Activated CD4-positive, alpha-beta memory T cell treated with anti-CD3 and anti-CD28 coated beads for 36 hours (primary cell): ENCODE measurements at regions of chr4 and their contacts with region 1.

Region 1: DNA sequence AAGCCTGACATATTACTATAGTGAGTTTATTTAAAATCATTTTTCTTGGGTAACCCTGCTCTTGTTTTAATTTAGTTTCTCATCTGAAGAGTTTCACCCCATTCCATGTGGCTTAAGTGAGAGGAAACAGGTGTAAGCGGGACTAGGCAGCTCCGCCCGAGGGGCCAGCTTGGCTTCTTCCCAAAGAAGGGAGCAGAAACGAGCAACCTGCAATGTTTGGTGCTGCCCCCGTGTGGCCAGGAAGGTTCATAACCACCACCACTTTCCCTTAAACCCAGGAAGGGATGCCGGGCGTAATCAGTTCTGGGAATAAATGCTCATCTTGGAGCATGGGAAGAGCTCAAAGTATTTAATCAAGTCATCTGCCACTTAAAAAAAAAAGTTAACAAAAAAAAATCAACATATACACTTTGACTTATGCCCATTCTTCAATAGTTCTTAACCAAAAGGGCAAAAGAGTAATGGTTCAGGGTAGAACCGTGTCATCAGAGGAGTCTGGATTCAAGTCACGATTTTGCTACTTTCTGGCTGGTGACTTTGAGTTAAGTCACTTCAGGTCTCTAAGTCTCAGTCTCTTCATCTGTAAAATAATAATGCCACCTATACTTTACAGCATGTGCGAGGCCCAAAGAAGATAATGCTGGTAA is 147.9 kb downstream of the NSUN7 start:
- DNase-seq: peak; percentile 76
- H3K4me3 Mint-ChIP-seq: peak overlapping the region; percentile 52
- H3K27ac Mint-ChIP-seq: no peak overlapping the region
- H3K4me1 Mint-ChIP-seq: peaks cover 4% of the 10 kb centered on the region
- H3K27me3 Mint-ChIP-seq: peaks cover 2% of the 10 kb centered on the region

Region 2: GRCh38 chr4:40736910-40737309 is 160.8 kb before region 1 on chr4:
- CTCF ChIA-PET with region 1: interaction called, 51 read pairs
- POLR2A ChIA-PET with region 1: no interaction called
- intact Hi-C with region 1: loop called (anchors 1 kb)
- DNase-seq: no peak
- H3K4me3 Mint-ChIP-seq: no peak overlapping the region
- H3K27ac Mint-ChIP-seq: no peak overlapping the region
- H3K4me1 Mint-ChIP-seq: peaks cover 3% of the 10 kb centered on the region
- H3K27me3 Mint-ChIP-seq: peaks cover 5% of the 10 kb centered on the region

Region 3: GRCh38 chr4:40840985-40841571 is 56.6 kb before region 1 on chr4:
- CTCF ChIA-PET with region 1: interaction called, 35 read pairs
- POLR2A ChIA-PET with region 1: no interaction called
- intact Hi-C with region 1: loop called (anchors 2 kb)
- DNase-seq: peak; percentile 90
- H3K4me3 Mint-ChIP-seq: no peak overlapping the region
- H3K27ac Mint-ChIP-seq: no peak overlapping the region
- H3K4me1 Mint-ChIP-seq: peaks cover 2% of the 10 kb centered on the region
- H3K27me3 Mint-ChIP-seq: peaks cover 8% of the 10 kb centered on the region

Region 4: GRCh38 chr4:40881096-40881495 is 16.6 kb before region 1 on chr4:
- CTCF ChIA-PET with region 1: interaction called, 15 read pairs
- POLR2A ChIA-PET with region 1: no interaction called
- intact Hi-C with region 1: no loop called
- DNase-seq: no peak
- H3K4me3 Mint-ChIP-seq: no peak overlapping the region
- H3K27ac Mint-ChIP-seq: no peak overlapping the region
- H3K4me1 Mint-ChIP-seq: no peaks in the 10 kb centered on the region
- H3K27me3 Mint-ChIP-seq: peaks cover 49% of the 10 kb centered on the region

Region 5: DNA sequence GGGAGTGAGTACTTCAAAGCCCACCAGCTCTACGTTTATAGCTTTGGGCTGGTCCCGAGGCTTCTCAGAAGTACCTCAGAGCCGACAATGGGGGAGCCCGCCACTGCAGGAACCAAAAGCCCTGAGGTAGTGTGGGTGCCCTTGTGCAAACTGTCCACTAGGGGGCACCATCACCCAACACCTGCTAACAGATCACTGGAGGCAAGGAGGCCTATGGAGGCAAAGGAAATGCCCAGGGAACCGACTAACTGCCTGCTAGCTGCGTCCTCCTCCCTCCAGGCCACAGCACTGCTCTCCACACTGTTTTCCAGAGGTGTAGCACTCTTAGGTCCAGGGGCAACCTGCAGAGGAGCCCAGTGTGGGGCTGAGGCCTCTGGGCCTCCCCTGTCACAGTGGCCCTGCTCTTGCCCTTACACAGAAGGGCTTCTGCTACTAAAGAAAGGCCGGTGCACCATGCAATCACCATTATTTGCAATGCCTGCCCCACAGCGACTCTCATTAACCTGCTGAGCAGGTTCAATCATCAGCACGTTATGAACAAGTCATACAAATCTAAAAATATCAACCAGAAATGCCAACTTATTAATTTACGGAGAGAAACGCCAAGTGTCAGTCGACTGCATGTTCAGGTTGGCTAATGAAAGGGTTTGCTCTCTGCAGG is 11.2 kb after region 1 on chr4:
- CTCF ChIA-PET with region 1: interaction called, 13 read pairs
- POLR2A ChIA-PET with region 1: no interaction called
- intact Hi-C with region 1: no loop called
- DNase-seq: peak; percentile 86
- H3K4me3 Mint-ChIP-seq: no peak overlapping the region
- H3K27ac Mint-ChIP-seq: peak overlapping the region; percentile 83
- H3K4me1 Mint-ChIP-seq: peaks cover 23% of the 10 kb centered on the region
- H3K27me3 Mint-ChIP-seq: no peaks in the 10 kb centered on the region

Region 6: GRCh38 chr4:41095973-41096372 is 198.3 kb after region 1 on chr4:
- CTCF ChIA-PET with region 1: no interaction called
- POLR2A ChIA-PET with region 1: no interaction called
- intact Hi-C with region 1: no loop called
- DNase-seq: no peak
- H3K4me3 Mint-ChIP-seq: no peak overlapping the region
- H3K27ac Mint-ChIP-seq: no peak overlapping the region
- H3K4me1 Mint-ChIP-seq: no peaks in the 10 kb centered on the region
- H3K27me3 Mint-ChIP-seq: peaks cover 4% of the 10 kb centered on the region